Activated T-helper 1 cell treated with anti-CD3 and anti-CD28 coated beads, Interleukin-12 subunit alpha, Interleukin-12 subunit beta, Interleukin-2, Interleukin-4 antibody, amounts not matched to agents 30 ng/mL and 10 ng/mL and 1 ng/mL, durations not matched to agents 14 hours and 24 hours and 36 hours (primary cell): ENCODE measurements at regions of chr15 and their contacts with region 1.

Region 1: DNA sequence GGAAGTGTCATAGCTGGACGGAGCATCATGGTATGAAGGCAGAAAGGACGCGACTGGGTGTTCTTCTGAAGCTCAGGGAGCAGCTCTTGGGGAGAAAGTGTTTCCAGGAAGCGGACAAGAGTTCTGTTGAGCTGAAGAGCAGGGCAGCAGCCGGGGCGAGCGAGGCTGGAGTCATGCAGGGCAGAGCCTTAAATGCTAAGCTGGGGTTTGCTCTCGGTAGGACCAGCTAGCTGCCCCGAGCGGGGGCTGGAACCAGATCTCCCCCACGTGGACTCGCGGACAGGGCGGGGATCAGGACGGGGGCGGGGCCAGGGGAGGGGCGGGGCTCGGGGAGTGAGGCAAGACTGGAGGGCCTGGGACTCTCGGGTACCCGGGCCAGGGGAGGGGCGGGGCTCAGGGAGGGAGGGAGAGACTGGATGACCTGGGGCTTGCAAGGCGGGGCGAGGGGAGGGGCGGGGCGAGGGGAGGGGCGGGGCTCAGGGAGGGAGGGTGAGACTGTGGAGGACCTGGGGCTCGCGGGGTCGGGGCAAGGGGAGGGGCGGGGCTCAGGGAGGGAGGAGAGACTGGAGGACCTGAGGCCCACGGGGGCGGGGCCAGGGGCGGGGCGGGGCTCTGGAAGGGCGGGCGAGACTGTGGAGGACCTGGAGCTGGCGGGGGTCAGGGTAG is 486 bp upstream of the FAH start:
- DNase-seq: peak; percentile 74
- H3K4me3 Mint-ChIP-seq: peak overlapping the region; percentile 83
- H3K27ac Mint-ChIP-seq: peak overlapping the region; percentile 73
- H3K4me1 Mint-ChIP-seq: peaks cover 35% of the 10 kb centered on the region
- H3K27me3 Mint-ChIP-seq: peaks cover 15% of the 10 kb centered on the region

Region 2: GRCh38 chr15:78872972-78873792 is 1279.1 kb before region 1 on chr15:
- intact Hi-C with region 1: loop called (anchors 2 kb)
- DNase-seq: peak; percentile 87
- H3K4me3 Mint-ChIP-seq: peak overlapping the region; percentile 93
- H3K27ac Mint-ChIP-seq: peak overlapping the region; percentile 98
- H3K4me1 Mint-ChIP-seq: peaks cover 47% of the 10 kb centered on the region
- H3K27me3 Mint-ChIP-seq: no peaks in the 10 kb centered on the region

Region 3: GRCh38 chr15:79743031-79743430 is 409.3 kb before region 1 on chr15:
- intact Hi-C with region 1: no loop called
- DNase-seq: no peak
- H3K4me3 Mint-ChIP-seq: no peak overlapping the region
- H3K27ac Mint-ChIP-seq: no peak overlapping the region
- H3K4me1 Mint-ChIP-seq: no peaks in the 10 kb centered on the region
- H3K27me3 Mint-ChIP-seq: peaks cover 2% of the 10 kb centered on the region

Region 4: DNA sequence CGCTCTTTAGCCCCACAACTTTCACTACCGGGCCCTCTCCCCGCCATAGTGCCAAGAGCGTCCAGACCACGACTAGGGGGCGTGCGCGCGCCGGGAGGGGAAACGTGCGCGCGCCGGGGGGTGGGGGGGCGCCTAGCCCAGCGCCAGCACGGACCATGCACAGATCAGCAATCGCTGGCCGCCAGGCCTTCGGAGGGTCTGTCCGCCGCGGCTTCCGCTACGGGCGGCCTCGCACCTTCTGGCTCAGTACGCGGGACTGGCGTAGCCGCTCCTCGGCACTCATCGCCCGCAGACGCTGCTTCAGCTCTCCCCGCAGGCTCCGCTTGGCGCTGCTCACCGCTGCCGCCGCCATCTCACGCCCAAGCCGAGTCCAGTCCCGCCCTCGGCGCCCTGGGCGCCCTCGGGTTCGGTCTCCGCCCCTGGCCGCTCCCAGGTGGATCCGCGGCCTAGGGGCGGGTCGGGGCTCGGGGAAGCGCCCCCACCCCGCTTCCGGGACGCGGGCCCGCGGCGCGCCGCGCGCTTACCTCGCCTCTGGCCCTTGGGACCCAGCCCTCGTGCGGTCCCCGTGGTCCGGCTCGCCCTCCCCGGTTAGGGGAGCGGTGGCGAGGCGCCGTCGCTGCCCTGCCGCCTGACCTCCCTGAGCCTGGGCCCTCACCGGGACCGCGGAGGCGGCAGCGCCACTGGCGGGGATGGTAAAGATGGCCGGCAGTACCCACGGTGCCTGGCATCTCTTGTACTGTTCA is 255.5 kb before region 1 on chr15 and contains the start of gene MTHFS:
- intact Hi-C with region 1: loop called (anchors 2 kb)
- DNase-seq: peak; percentile 75
- H3K4me3 Mint-ChIP-seq: peak within 1 kb of the TSS; percentile 97
- H3K27ac Mint-ChIP-seq: peak within 1 kb of the TSS; percentile 96
- H3K4me1 Mint-ChIP-seq: peaks cover 44% of the 10 kb centered on the region
- H3K27me3 Mint-ChIP-seq: no peaks in the 10 kb centered on the region
- total RNA-seq, gene MTHFS: 32.2 and 34.0 TPM in 2 replicates

Region 5: GRCh38 chr15:79970624-79971434 is 181.5 kb before region 1 on chr15 and contains the start of gene BCL2A1:
- intact Hi-C with region 1: loop called (anchors 1 kb)
- DNase-seq: peak; percentile 64
- H3K4me3 Mint-ChIP-seq: peak within 1 kb of the TSS; percentile 96
- H3K27ac Mint-ChIP-seq: peak within 1 kb of the TSS; percentile 96
- H3K4me1 Mint-ChIP-seq: peaks cover 54% of the 10 kb centered on the region
- H3K27me3 Mint-ChIP-seq: no peaks in the 10 kb centered on the region
- total RNA-seq, gene BCL2A1: 91.8 and 95.0 TPM in 2 replicates

Region 6: DNA sequence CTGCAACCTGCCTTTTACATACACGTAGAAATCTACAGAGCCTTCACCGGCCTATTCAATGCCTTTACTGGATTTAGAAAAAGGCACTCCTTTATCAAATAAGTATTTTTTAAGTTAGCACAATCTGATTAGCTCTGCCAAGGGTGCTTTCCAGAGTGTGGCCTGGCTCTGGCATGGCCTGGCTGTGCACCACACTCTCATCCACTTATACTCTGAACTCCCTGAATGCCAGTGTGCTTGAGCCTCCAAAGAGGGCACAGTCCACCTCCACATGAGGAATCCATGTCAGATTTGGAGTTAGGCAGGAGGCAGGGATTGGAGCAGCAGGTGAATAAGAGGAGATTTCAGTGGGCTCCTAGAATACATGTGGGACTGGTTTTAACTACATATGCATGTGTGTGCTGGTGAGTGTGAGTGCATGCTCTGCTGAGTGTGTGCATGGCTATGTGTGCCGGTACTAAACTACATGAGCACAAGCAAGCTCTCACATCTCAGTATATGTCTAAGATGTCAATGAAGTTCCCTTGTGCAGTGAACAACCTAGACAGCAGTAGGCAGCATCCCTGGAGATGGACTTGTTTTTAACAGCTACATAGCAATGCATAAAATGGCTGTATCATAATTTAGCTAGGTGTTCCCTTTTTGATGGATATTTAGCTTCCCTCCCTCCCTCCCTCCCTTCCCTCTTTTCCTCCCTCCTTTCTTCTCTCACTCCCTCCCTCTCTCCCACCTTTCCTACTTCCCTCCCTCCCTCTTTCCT is 110.6 kb before region 1 on chr15:
- intact Hi-C with region 1: no loop called
- DNase-seq: no peak
- H3K4me3 Mint-ChIP-seq: no peak overlapping the region
- H3K27ac Mint-ChIP-seq: no peak overlapping the region
- H3K4me1 Mint-ChIP-seq: no peaks in the 10 kb centered on the region
- H3K27me3 Mint-ChIP-seq: no peaks in the 10 kb centered on the region

Region 7: GRCh38 chr15:80173022-80173759 is 20.9 kb after region 1 on chr15:
- intact Hi-C with region 1: loop called (anchors 1 kb)
- DNase-seq: peak; percentile 57
- H3K4me3 Mint-ChIP-seq: no peak overlapping the region
- H3K27ac Mint-ChIP-seq: no peak overlapping the region
- H3K4me1 Mint-ChIP-seq: peaks cover 5% of the 10 kb centered on the region
- H3K27me3 Mint-ChIP-seq: no peaks in the 10 kb centered on the region

Region 8: GRCh38 chr15:80418892-80419537 is 266.7 kb after region 1 on chr15:
- intact Hi-C with region 1: no loop called
- DNase-seq: no peak
- H3K4me3 Mint-ChIP-seq: no peak overlapping the region
- H3K27ac Mint-ChIP-seq: no peak overlapping the region
- H3K4me1 Mint-ChIP-seq: no peaks in the 10 kb centered on the region
- H3K27me3 Mint-ChIP-seq: peaks cover 11% of the 10 kb centered on the region

Region 9: GRCh38 chr15:80550219-80550907 is 398.1 kb after region 1 on chr15:
- intact Hi-C with region 1: no loop called
- DNase-seq: no peak
- H3K4me3 Mint-ChIP-seq: no peak overlapping the region
- H3K27ac Mint-ChIP-seq: no peak overlapping the region
- H3K4me1 Mint-ChIP-seq: no peaks in the 10 kb centered on the region
- H3K27me3 Mint-ChIP-seq: peaks cover 12% of the 10 kb centered on the region

Region 10: GRCh38 chr15:81000624-81001151 is 848.4 kb after region 1 on chr15 and contains the start of gene TLNRD1:
- intact Hi-C with region 1: loop called (anchors 1 kb)
- DNase-seq: peak; percentile 89
- H3K4me3 Mint-ChIP-seq: peak within 1 kb of the TSS; percentile 97
- H3K27ac Mint-ChIP-seq: peak within 1 kb of the TSS; percentile 98
- H3K4me1 Mint-ChIP-seq: peaks cover 62% of the 10 kb centered on the region
- H3K27me3 Mint-ChIP-seq: peaks cover 2% of the 10 kb centered on the region
- total RNA-seq, gene TLNRD1: 30.2 and 30.8 TPM in 2 replicates